Activated CD8-positive, alpha-beta T cell treated with anti-CD3 and anti-CD28 coated beads, Interleukin-2, amount 10 ng/mL, durations not matched to agents 7 days and 5 days (primary cell): ENCODE measurements at regions of chr2 and their contacts with region 1.

Region 1: DNA sequence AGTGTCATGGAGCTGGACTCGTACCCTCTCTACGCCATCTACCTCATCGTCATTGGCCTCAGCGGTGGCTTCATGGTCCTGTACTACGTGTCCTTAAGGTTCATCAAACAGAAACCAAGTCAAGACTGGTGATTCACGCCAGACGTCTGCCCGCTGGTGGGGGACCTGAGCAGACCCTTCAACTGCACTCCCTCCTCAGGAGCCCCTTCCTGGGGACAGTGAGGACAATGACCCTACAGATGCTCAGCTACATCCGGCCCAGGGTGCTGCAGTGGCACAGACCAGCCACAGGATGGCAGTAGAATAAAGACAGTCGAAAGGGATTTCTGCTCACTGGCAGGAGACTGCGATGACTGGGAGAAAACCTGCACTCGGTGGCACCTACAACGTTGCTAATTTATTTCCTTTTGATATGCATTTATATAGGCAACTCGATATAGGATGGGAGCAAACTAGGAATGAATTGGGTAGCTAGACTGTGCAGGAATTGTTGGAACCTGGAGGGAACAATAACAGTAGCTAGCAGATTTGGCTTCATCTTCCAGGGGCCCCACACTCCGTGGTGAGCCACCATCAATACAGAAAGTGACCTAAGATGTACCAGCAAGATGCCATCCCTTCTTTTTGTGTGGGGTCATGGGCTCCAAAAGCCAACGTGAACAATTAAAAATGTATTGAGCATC is 39.2 kb downstream of the ABCG8 start:
- DNase-seq: peak; percentile 75
- ATAC-seq: peak; percentile 79
- H3K4me3 Mint-ChIP-seq: no peak overlapping the region
- H3K27ac Mint-ChIP-seq: no peak overlapping the region
- H3K4me1 Mint-ChIP-seq: peaks cover 4% of the 10 kb centered on the region
- H3K27me3 Mint-ChIP-seq: peaks cover 2% of the 10 kb centered on the region

Region 2: GRCh38 chr2:43648994-43649701 is 228.8 kb before region 1 on chr2:
- CTCF ChIA-PET with region 1: no interaction called
- POLR2A ChIA-PET with region 1: no interaction called
- DNase-seq: no peak
- ATAC-seq: no peak
- H3K4me3 Mint-ChIP-seq: no peak overlapping the region
- H3K27ac Mint-ChIP-seq: no peak overlapping the region
- H3K4me1 Mint-ChIP-seq: no peaks in the 10 kb centered on the region
- H3K27me3 Mint-ChIP-seq: peaks cover 19% of the 10 kb centered on the region

Region 3: DNA sequence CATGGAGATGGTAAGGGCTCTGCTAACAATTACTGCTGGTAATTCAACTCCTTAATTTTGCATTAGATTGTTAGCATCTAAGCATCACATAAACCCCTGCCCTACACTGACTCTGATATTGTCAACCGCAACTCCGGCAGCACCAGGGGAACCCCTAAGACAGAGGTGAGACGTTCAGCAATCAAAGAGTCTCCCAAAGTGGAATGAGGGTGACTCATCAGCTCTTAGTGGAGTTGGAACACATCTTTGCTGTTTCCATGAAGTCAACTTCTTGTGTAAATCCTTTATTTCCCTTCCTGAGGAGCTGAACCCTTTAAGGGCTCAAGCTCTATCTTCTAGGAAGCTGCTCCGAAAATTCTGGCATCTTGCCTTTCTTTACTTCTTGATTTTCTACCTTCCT is 12.9 kb after region 1 on chr2:
- CTCF ChIA-PET with region 1: interaction called, 21 read pairs
- POLR2A ChIA-PET with region 1: no interaction called
- DNase-seq: no peak
- ATAC-seq: no peak
- H3K4me3 Mint-ChIP-seq: no peak overlapping the region
- H3K27ac Mint-ChIP-seq: no peak overlapping the region
- H3K4me1 Mint-ChIP-seq: no peaks in the 10 kb centered on the region
- H3K27me3 Mint-ChIP-seq: no peaks in the 10 kb centered on the region

Region 4: GRCh38 chr2:43898134-43898837 is 20.4 kb after region 1 on chr2:
- CTCF ChIA-PET with region 1: interaction called, 16 read pairs
- POLR2A ChIA-PET with region 1: no interaction called
- DNase-seq: no peak
- ATAC-seq: no peak
- H3K4me3 Mint-ChIP-seq: no peak overlapping the region
- H3K27ac Mint-ChIP-seq: no peak overlapping the region
- H3K4me1 Mint-ChIP-seq: no peaks in the 10 kb centered on the region
- H3K27me3 Mint-ChIP-seq: no peaks in the 10 kb centered on the region